Endothelial cell of umbilical vein (primary cell): ENCODE measurements at regions of chr1 and their contacts with region 1.

Region 1: DNA sequence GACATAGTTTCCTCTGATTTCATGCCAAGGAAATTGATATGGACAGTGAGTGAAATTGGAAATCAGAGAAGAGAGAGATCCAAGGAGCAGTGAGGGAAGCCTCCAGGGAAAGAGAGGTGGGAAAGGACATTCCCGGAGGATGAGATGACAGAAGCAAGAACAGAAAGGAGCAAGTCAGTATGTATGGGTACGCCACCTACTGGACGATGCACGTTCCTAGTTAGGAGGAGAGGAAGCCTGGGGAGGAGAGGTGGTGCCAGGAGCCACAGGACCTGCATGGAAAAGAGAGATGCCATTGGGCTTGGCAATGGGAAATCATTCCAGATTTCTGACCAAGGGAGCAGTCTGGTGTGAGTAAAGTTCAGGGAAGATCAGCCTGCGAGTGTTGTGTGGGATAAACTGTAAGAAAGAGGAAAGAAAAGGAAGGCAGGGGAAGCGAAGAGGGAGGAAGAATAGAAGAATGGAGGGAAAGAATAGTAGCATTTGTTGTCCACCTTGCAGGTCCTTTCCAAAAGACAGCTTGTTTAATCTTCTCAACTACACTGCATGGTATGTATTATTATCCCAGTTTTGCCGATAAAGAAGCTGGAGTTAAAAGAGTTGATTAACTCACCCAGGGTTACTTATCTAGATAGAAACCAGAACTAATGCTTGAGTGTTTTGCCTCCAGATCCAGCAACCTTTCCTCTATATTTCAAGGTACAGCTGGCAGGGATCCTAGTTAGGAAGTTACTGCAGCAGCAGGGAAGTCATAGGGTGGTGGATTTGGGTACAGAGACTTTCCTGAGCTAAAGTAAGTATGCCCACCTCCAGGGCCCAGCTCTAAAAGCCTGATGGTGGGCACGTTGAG is 27.4 kb downstream of the C1orf116 start:
- DNase-seq: peak; percentile 33
- H3K4me3 ChIP-seq: no peak overlapping the region
- H3K27ac ChIP-seq: no peak overlapping the region
- H3K4me1 ChIP-seq: no peaks in the 10 kb centered on the region
- H3K27me3 ChIP-seq: peaks cover 0 to 3% of the 10 kb centered on the region in 2 experiments
- CTCF ChIP-seq: peak; percentile 83 to 86
- POLR2A ChIP-seq: no peak

Region 2: GRCh38 chr1:206935491-206936067 is 69.6 kb before region 1 on chr1:
- CTCF ChIA-PET with region 1: no interaction called
- POLR2A ChIA-PET with region 1: no interaction called
- dilution Hi-C with region 1: no loop called
- intact Hi-C with region 1: loop called (anchors 2 kb)
- DNase-seq: peak; percentile 25
- H3K4me3 ChIP-seq: no peak overlapping the region
- H3K27ac ChIP-seq: no peak overlapping the region
- H3K4me1 ChIP-seq: no peaks in the 10 kb centered on the region
- H3K27me3 ChIP-seq: no peaks in the 10 kb centered on the region
- CTCF ChIP-seq: peak; percentile 68 to 89
- POLR2A ChIP-seq: no peak